GM10248 (cell line): ENCODE measurements at regions of chr3 and their contacts with region 1.

Region 1: GRCh38 chr3:55721716-55722484 is 234.8 kb upstream of the WNT5A start:
- DNase-seq: peak; percentile 32
- CTCF ChIP-seq: peak; percentile 53

Region 2: GRCh38 chr3:55330355-55330754 is 391.5 kb before region 1 on chr3:
- CTCF ChIA-PET with region 1: no interaction called
- POLR2A ChIA-PET with region 1: no interaction called
- DNase-seq: no peak
- CTCF ChIP-seq: no peak

Region 3: GRCh38 chr3:55434789-55435188 is 287.1 kb before region 1 on chr3:
- CTCF ChIA-PET with region 1: interaction called, 12 read pairs
- POLR2A ChIA-PET with region 1: no interaction called
- DNase-seq: peak; percentile 19
- CTCF ChIP-seq: peak; percentile 71

Region 4: GRCh38 chr3:55485211-55485791 is 236.6 kb before region 1 on chr3:
- CTCF ChIA-PET with region 1: interaction called, 43 read pairs
- POLR2A ChIA-PET with region 1: no interaction called
- DNase-seq: peak; percentile 86
- CTCF ChIP-seq: peak; percentile 73